ENCODE measurements at regions of chr9 and their contacts with region 1.

Region 1: DNA sequence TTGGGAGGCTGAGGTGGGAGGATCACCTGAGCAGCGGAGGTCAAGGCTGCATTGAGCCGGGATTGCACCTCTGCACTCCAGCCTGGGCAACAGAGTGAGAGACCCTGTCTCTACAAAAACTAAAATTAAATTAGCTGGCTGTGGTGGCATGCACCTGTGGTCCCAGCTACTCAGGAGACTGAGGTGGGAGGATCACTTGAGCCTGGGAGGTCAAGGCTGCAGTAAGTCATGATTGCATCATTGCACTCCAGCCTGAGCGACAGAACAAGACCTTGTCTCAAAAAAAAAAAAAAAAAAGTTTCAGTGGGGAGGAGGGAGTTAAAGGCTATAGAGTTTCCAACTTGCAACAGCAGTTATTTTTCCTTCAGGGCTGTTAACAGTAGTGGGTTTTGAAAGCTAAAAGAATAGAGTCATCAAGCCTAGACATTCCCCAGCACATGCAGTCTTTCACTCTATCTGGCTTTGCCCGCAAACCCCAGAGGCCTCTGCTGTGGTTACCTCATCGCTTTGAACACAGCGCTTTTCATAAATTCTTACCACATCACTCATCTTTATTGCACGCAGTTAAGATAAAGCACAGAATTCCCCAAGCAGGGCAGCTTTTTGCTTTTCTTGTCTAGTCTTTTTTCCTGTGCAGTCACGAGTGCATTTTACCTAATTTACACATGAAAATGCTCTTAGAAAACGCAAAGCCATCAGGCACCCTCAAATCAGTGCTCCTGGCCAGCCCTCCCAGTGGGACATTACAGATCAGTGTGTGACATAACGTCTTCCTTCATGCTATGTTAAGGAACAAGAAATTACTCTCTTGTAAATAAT is 8.7 kb upstream of the SLC2A8 start:
- DNase-seq: peak; percentile 83
- H3K4me3 Mint-ChIP-seq: peak overlapping the region; percentile 24
- H3K27ac Mint-ChIP-seq: peak overlapping the region; percentile 74
- H3K4me1 Mint-ChIP-seq: peaks cover 26% of the 10 kb centered on the region
- H3K27me3 Mint-ChIP-seq: peaks cover 41% of the 10 kb centered on the region

Region 2: DNA sequence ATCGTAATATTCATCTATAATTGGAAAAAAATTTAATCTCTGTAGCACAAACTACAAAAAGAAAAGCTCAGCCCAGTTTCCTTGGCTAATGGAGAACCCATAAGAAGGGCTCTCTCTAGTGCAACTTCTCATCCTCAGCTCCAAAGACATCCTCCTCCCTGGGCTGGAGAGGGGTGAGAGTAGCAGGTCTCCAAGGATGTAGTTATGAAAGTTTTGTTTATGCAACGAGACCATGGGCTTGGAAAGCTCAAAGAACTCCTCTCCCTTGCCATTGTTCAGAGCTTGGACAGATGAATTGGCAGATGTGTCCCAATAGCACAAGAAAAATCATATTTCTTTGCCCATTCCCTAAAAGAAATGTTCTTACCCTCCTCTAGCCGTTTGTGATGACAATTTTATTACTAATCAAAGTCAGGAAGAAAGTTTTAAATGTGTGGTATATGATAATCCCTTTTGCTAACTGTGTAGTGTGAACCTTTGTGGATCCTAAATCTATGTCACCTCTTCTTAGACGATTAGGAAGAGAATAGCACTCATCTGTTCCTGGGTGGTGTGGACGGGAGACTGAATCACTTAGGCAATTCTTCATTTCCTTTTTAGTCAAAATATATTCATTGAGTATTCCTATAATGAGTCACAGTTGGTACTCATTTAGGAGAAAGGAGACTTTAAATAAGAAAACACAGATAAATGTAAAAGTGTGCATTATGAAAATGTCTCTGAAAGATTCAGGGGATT is 71.5 kb before region 1 on chr9:
- intact Hi-C with region 1: loop called (anchors 2 kb)
- DNase-seq: no peak
- H3K4me3 Mint-ChIP-seq: no peak overlapping the region
- H3K27ac Mint-ChIP-seq: no peak overlapping the region
- H3K4me1 Mint-ChIP-seq: peaks cover 12% of the 10 kb centered on the region
- H3K27me3 Mint-ChIP-seq: peaks cover 13% of the 10 kb centered on the region

Measured in activated T-helper 2 cell treated with anti-CD3 and anti-CD28 coated beads, Interferon-gamma antibody, Interleukin-2, Interleukin-4, amounts not matched to agents 10 μg/mL and 5 μg/mL and 100 μg/mL, durations not matched to agents 14 hours and 24 hours and 36 hours (primary cell).